ENCODE measurements at regions of chr3 and their contacts with region 1.

Region 1: GRCh38 chr3:149480325-149481017 is 6.0 kb downstream of the TM4SF4 start:
- DNase-seq: peak; percentile 97
- H3K4me3 Mint-ChIP-seq: peak overlapping the region; percentile 6
- H3K27ac Mint-ChIP-seq: peak overlapping the region; percentile 99
- H3K4me1 Mint-ChIP-seq: peaks cover 64% of the 10 kb centered on the region
- H3K27me3 Mint-ChIP-seq: no peaks in the 10 kb centered on the region
- CTCF ChIP-seq: peak; percentile 96

Region 2: DNA sequence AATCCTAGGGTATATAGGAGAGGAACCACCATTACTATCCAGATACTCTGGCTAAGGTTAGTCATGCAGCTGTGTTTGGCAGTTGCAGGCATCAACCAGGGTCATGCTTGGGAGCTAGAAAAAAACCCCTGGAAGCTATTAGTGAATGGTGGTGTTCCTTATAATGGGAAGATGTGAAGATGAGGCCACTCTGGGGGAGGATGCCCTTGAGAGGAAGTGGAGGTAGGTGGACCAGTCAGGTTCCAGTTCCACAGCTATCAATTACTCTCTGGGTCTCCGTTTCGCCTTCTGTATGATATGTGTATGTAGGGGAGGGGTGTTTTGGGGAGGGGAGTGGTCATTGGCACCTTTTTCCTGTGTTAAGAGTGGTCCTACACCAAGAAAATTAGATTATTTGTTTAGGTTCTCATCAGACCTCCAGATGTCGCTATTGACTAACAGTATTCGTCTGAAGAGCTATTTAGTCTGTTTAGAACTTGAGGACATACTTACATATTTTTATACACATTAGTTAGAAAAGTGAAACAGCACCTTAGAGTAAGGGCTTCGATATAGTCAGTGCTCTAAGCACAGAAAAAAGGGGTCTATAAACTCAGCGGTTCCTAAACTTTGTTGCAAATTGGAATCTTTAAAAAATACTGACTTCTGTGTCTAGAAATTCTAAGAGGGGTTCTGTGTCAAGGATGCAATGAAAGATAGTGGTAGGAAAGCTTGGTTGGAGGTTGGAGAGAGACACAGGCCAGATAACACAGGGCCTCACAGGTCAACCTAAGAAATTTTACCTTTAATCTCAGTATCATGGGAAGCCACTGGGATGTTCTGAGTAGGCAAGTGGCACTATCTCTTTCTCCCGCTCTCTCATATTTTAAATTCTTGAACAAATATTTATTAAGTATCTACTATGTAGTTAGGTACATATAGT is 360.2 kb before region 1 on chr3:
- CTCF ChIA-PET with region 1: interaction called, 4 read pairs
- intact Hi-C with region 1: loop called (anchors 2 kb)
- DNase-seq: peak; percentile 41
- H3K4me3 Mint-ChIP-seq: no peak overlapping the region
- H3K27ac Mint-ChIP-seq: no peak overlapping the region
- H3K4me1 Mint-ChIP-seq: no peaks in the 10 kb centered on the region
- H3K27me3 Mint-ChIP-seq: no peaks in the 10 kb centered on the region
- CTCF ChIP-seq: peak; percentile 81

Region 3: DNA sequence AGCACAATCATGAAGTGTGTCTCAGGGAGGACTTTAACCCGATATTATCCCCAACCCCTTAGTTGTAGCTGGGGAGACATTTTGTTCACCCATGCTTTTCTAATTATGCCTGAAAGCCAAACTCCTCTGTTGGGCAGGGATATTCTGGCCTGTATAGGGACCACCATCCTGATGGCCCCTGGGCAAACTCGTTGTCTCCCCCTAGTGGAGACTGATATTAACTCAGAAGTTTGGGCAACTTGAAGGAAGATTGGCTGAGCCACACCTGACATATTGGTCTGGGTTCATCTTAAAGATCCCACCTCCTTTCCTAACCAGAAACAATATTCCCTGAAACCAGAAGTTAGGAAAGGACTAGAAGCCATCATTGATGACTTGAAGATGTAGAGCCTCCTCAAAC is 189.3 kb before region 1 on chr3:
- CTCF ChIA-PET with region 1: no interaction called
- intact Hi-C with region 1: no loop called
- DNase-seq: no peak
- H3K4me3 Mint-ChIP-seq: no peak overlapping the region
- H3K27ac Mint-ChIP-seq: no peak overlapping the region
- H3K4me1 Mint-ChIP-seq: peaks cover 18% of the 10 kb centered on the region
- H3K27me3 Mint-ChIP-seq: no peaks in the 10 kb centered on the region
- CTCF ChIP-seq: peak; percentile 60

Region 4: GRCh38 chr3:149352556-149352955 is 127.9 kb before region 1 on chr3:
- CTCF ChIA-PET with region 1: interaction called, 4 read pairs
- intact Hi-C with region 1: loop called (anchors 1 kb)
- DNase-seq: peak; percentile 95
- H3K4me3 Mint-ChIP-seq: no peak overlapping the region
- H3K27ac Mint-ChIP-seq: peak overlapping the region; percentile 77
- H3K4me1 Mint-ChIP-seq: peaks cover 81% of the 10 kb centered on the region
- H3K27me3 Mint-ChIP-seq: no peaks in the 10 kb centered on the region
- CTCF ChIP-seq: peak; percentile 90

Region 5: GRCh38 chr3:149366941-149367840 is 113.3 kb before region 1 on chr3:
- CTCF ChIA-PET with region 1: interaction called, 10 read pairs
- intact Hi-C with region 1: no loop called
- DNase-seq: peak; percentile 92
- H3K4me3 Mint-ChIP-seq: peak overlapping the region; percentile 54
- H3K27ac Mint-ChIP-seq: peak overlapping the region; percentile 99
- H3K4me1 Mint-ChIP-seq: peaks cover 67% of the 10 kb centered on the region
- H3K27me3 Mint-ChIP-seq: peaks cover 8% of the 10 kb centered on the region
- CTCF ChIP-seq: no peak

Region 6: DNA sequence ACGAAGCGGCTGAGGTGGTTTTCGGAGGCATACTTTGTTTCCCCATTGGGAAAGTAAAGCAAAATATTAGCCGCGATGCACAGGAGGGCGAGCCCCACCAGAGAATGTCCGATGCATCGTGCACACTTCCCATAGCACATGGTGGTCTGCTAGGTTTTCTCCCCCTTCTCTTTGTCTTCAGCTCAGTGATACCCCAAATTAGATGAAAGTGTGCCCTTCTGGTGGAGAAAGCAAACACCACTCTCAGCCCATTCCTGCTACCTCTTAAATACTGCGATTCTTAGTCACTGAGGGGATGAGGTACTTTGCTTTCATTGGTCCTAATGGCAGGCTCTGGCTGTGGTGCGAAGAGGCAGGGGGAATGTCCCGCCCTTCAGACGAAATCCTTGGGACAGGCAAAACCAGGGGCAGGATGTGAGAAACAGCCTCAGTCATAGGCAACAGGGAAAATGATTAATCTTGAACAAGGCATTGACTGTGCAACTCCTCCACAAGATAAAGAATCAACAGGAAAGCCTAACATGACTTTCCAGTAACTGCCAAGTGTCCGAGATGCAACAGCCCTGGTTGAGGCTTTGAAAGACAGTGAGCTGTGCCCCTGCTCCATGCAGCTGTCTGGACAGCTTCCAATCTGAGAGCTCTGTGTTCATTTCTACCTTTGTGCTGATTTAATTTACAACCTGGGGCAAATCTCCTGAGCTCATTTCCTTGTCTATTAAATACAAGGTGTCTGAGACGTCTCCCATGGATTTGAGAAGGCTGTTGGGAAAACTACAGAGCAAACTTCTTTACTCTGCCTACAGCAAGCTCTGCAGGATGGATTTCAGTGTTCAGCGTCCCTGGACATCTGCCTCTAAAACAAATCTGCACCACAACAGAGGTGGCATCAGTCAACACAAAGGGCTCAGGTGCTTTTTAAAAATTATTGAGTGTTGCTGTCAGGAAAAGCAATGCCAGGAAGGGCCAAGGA is 102.8 kb before region 1 on chr3 and contains the start of gene TM4SF1:
- CTCF ChIA-PET with region 1: interaction called, 11 read pairs
- intact Hi-C with region 1: loop called (anchors 1 kb)
- DNase-seq: peak; percentile 97
- H3K4me3 Mint-ChIP-seq: peak within 1 kb of the TSS; percentile 75
- H3K27ac Mint-ChIP-seq: peak within 1 kb of the TSS; percentile 95
- H3K4me1 Mint-ChIP-seq: peaks cover 57% of the 10 kb centered on the region
- H3K27me3 Mint-ChIP-seq: no peaks in the 10 kb centered on the region
- CTCF ChIP-seq: peak; percentile 19
- total RNA-seq, gene TM4SF1: 919 and 981 TPM in 2 replicates

Region 7: GRCh38 chr3:149384911-149385321 is 95.6 kb before region 1 on chr3:
- CTCF ChIA-PET with region 1: interaction called, 10 read pairs
- intact Hi-C with region 1: no loop called
- DNase-seq: peak; percentile 64
- H3K4me3 Mint-ChIP-seq: peak overlapping the region; percentile 59
- H3K27ac Mint-ChIP-seq: peak overlapping the region; percentile 97
- H3K4me1 Mint-ChIP-seq: peaks cover 85% of the 10 kb centered on the region
- H3K27me3 Mint-ChIP-seq: no peaks in the 10 kb centered on the region
- CTCF ChIP-seq: no peak

Region 8: DNA sequence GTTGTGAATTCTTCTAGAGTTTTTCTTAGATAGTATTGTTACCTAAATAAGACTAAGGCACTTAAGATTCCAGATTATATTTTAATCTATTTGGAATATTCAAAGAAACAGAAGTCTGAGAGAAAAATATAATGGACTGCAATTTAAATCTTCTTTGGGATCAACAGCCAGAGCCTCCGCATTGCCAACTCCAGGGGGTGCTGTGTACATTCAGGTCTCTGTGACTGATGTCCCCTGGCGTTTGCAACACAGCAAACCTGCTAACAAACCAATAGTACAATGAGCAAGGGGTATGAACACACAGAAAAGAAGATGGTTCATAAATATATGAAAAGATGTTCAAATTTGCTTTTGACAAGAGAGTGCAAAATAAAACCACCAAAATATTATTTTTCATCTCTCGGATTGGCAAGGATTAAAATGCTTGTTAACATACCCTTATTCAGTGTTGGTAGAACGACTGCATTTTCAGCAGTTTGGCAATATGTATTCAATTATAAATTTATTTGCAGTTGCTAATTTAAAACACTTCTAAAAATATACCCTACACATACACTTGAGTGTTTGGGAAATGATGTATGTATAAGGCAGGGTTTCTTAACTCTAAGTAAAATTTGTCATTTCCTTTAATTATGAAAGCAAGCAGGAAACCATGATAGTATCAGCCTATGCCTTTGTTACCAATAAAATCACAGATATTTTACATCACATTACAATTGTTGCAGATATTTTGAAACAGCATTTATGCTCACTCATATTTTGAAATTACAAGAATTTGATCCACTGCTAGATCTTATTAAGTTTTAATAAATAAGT is 86.9 kb before region 1 on chr3:
- CTCF ChIA-PET with region 1: interaction called, 8 read pairs
- intact Hi-C with region 1: loop called (anchors 1 kb)
- DNase-seq: peak; percentile 93
- H3K4me3 Mint-ChIP-seq: no peak overlapping the region
- H3K27ac Mint-ChIP-seq: peak overlapping the region; percentile 40
- H3K4me1 Mint-ChIP-seq: peaks cover 84% of the 10 kb centered on the region
- H3K27me3 Mint-ChIP-seq: no peaks in the 10 kb centered on the region
- CTCF ChIP-seq: peak; percentile 99

Region 9: DNA sequence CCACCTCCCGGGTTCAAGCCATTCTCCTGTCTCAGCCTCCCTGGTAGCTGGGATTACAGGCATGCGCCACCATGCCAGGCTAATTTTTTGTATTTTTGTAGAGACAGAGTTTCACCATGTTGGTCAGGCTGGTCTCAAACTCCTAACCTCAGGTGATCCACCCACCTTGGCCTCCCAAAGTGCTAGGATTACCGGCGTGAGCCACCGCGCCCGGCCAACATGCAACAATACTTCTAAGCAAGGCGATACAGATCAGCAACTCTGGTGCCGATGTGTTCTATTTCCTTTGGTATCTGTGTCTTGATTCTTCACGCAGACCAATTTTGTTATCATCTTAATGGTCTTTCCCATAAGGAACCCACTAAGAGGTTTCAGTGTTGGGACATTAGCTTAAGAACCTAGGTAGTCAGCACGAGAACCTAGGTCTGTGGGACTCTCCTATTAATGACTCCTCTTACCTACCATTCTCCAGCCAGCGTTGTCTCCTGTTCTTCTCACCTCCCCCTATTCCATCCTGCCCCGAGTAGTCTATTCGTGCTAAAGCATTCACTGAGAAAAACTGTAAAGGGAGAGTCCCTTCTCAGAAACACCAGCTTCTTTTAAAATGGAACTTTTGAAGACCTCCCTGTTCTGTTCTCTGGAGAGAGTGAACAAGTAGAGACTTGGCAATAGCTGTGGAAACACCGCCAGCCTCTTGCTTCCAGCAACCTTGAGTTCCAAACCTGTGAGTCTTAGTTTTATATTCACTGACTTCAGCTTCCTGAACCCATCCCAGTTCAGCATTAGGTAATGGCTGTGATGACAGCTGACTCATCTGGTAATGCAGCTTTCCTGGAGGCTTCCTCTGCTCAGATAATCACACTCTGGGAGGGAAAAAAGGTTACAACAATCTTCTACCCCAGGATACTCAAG is 988.8 kb after region 1 on chr3:
- CTCF ChIA-PET with region 1: no interaction called
- intact Hi-C with region 1: no loop called
- DNase-seq: peak; percentile 65
- H3K4me3 Mint-ChIP-seq: peak overlapping the region; percentile 43
- H3K27ac Mint-ChIP-seq: peak overlapping the region; percentile 81
- H3K4me1 Mint-ChIP-seq: peaks cover 39% of the 10 kb centered on the region
- H3K27me3 Mint-ChIP-seq: no peaks in the 10 kb centered on the region
- CTCF ChIP-seq: no peak

Measured in Calu3 (cell line).